ENCODE measurements at regions of chr1 and their contacts with region 1.

Region 1: GRCh38 chr1:171801487-171801891 is 20.0 kb downstream of the METTL13 start:
- DNase-seq: peak; percentile 35
- ATAC-seq: peak; percentile 76
- H3K4me3 Mint-ChIP-seq: no peak overlapping the region
- H3K27ac Mint-ChIP-seq: peak overlapping the region; percentile 77; the same call in 1 of the 2 replicates
- H3K4me1 Mint-ChIP-seq: peaks cover 25% of the 10 kb centered on the region
- H3K27me3 Mint-ChIP-seq: no peaks in the 10 kb centered on the region
- CTCF ChIP-seq: peak; percentile 52; the same call in 1 of the 2 replicates

Region 2: DNA sequence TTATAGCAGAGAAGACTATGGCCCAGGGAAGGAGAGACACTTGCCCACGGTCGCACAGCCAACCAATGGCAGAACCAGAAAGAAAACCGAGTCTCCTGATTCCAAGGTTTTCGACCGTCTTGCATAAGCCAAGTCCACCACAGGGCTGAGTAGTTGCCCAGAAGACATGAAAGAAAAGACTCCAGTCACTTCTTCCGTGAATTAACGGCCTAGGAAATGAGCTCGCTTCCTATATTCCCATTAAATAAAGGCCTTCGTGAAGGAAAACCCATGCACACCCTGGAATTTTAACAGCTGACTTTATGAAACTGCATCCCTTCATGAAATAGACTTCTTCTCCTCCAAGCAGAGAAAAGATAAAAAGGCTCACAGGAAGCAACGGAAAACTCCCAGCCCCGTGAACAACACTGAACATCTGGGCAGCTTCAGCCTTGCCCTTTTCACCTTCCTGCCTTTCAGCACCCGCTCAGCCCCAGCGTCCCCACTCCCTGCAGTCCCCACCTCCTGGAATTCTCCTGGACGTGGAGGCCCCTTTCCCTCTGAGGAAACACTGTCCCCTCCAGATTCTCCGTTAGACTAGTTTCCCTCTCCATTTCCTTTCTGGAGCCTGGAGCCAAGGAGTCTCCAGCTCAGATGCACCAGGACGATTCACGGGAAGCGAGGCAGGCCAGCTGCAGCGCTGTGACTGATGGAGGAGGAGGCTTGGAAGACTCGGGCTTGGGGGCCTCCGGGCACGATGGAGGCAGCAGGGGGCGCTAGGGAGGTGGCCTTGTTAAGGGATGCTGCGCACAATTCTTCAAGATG is 146.3 kb before region 1 on chr1:
- CTCF ChIA-PET with region 1: interaction called, 18 read pairs
- POLR2A ChIA-PET with region 1: no interaction called
- DNase-seq: peak; percentile 92
- ATAC-seq: peak; percentile 97
- H3K4me3 Mint-ChIP-seq: peak overlapping the region; percentile 51
- H3K27ac Mint-ChIP-seq: no peak overlapping the region
- H3K4me1 Mint-ChIP-seq: peaks cover 16% of the 10 kb centered on the region
- H3K27me3 Mint-ChIP-seq: no peaks in the 10 kb centered on the region
- CTCF ChIP-seq: peak; percentile 70

Region 3: GRCh38 chr1:171811672-171812071 is 10.2 kb after region 1 on chr1:
- CTCF ChIA-PET with region 1: interaction called, 19 read pairs
- POLR2A ChIA-PET with region 1: no interaction called
- DNase-seq: no peak
- ATAC-seq: no peak
- H3K4me3 Mint-ChIP-seq: no peak overlapping the region
- H3K27ac Mint-ChIP-seq: no peak overlapping the region
- H3K4me1 Mint-ChIP-seq: peaks cover 21% of the 10 kb centered on the region
- H3K27me3 Mint-ChIP-seq: no peaks in the 10 kb centered on the region
- CTCF ChIP-seq: no peak

Region 4: GRCh38 chr1:171841050-171841940 is 39.8 kb after region 1 on chr1 and contains the start of gene DNM3:
- CTCF ChIA-PET with region 1: interaction called, 30 read pairs
- POLR2A ChIA-PET with region 1: no interaction called
- DNase-seq: peak; percentile 82
- ATAC-seq: peak; percentile 88
- H3K4me3 Mint-ChIP-seq: peak within 1 kb of the TSS; percentile 87
- H3K27ac Mint-ChIP-seq: peak within 1 kb of the TSS; percentile 74; the same call in 1 of the 2 replicates
- H3K4me1 Mint-ChIP-seq: peaks cover 19% of the 10 kb centered on the region
- H3K27me3 Mint-ChIP-seq: peaks cover 45% of the 10 kb centered on the region
- CTCF ChIP-seq: no peak
- total RNA-seq, gene DNM3: 0.99 to 1.9 TPM (median 1.6 TPM) in 3 replicates

Region 5: DNA sequence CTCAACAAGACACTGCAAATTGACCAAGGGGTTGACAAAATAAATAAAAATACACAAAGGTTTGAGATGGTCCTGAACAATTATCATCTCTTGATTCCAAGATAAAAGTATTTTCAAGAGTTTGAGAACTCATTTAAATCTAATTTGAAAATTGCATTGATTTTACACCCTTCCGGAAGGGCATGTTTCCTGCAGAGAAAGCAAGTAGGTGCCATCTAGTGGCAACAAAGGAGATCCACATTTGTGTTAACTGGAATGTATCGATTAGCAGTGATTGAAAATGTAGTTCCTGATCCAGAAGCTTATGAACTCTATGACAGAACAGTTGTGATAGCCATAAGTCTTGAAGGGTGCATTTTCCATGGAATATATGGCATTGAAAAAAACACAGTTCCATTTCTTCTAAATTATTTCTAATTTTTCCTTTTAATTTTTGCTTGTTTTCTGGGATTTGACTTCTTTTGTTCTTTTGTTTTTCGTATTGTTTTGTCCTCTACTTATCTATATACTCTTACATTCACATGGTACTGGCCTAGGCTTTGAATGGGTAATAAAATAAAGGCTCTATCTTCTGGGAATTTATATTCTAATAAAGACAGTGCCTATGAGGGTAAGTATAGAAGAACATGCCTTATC is 183.5 kb after region 1 on chr1:
- CTCF ChIA-PET with region 1: interaction called, 277 read pairs
- POLR2A ChIA-PET with region 1: interaction called, 4 read pairs
- DNase-seq: no peak
- ATAC-seq: peak; percentile 66
- H3K4me3 Mint-ChIP-seq: no peak overlapping the region
- H3K27ac Mint-ChIP-seq: peak overlapping the region; percentile 57; the same call in 1 of the 2 replicates
- H3K4me1 Mint-ChIP-seq: peaks cover 3% of the 10 kb centered on the region
- H3K27me3 Mint-ChIP-seq: no peaks in the 10 kb centered on the region
- CTCF ChIP-seq: peak; percentile 61

Region 6: GRCh38 chr1:172002725-172003345 is 201.3 kb after region 1 on chr1:
- CTCF ChIA-PET with region 1: interaction called, 38 read pairs
- POLR2A ChIA-PET with region 1: no interaction called
- DNase-seq: no peak
- ATAC-seq: no peak
- H3K4me3 Mint-ChIP-seq: no peak overlapping the region
- H3K27ac Mint-ChIP-seq: no peak overlapping the region
- H3K4me1 Mint-ChIP-seq: no peaks in the 10 kb centered on the region
- H3K27me3 Mint-ChIP-seq: no peaks in the 10 kb centered on the region
- CTCF ChIP-seq: no peak

Measured in WTC11 (cell line).